GM12878 (cell line): ENCODE measurements at regions of chr2 and their contacts with region 1.

Region 1: DNA sequence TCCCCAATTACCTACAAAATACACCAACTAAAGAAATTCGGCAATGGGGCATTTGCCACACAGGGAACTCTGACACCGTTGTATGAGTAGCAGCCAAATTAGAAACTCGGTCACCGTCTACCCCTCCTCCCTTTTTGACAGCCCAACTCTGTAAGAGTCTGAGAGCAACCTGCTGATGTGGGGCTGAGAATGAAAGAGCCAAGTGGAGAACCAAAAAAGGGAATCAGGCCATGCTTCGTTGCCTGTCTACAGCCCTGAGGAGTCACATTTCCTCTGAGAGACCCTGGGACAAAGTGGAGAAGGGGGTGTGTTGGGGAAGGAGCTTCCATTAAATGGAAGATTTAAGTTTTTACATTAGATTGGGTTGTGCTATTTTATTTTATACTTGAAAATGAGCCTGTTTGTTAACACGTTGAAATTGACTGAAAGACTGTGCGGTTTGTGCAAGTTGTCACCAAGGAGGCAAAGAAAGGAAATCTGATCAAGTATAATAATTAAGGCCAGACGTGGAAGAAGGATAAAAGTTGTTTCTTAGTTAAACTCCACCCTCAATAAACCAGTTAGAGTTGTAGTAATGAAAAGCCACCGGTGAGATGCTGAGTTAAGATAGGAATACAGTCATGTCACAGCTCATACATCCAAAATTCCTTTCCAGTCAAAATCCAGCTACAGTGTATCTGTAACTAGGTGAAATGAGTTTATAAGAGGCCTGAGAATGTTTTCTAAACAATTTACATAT is 131.7 kb upstream of the CREB1 start:
- DNase-seq: no peak
- ATAC-seq: no peak
- H3K4me3 ChIP-seq: no peak overlapping the region
- H3K27ac ChIP-seq: no peak overlapping the region
- H3K4me1 ChIP-seq: no peaks in the 10 kb centered on the region
- H3K27me3 ChIP-seq: no peaks in the 10 kb centered on the region; a peak in 1 of 4 replicates
- CTCF ChIP-seq: no peak
- EP300 ChIP-seq: no peak
- POLR2A ChIP-seq: no peak
- RAD21 ChIP-seq: no peak

Region 2: GRCh38 chr2:207408086-207408794 is 10.2 kb after region 1 on chr2:
- CTCF ChIA-PET with region 1: interaction called, 3 read pairs
- POLR2A ChIA-PET with region 1: no interaction called
- RAD21 ChIA-PET with region 1: no interaction called
- SMC1A ChIA-PET with region 1: interaction called, 10 read pairs
- in situ Hi-C with region 1: no loop called
- intact Hi-C with region 1: no loop called
- DNase-seq: peak; percentile 68
- ATAC-seq: peak; percentile 96
- H3K4me3 ChIP-seq: no peak overlapping the region
- H3K27ac ChIP-seq: no peak overlapping the region
- H3K4me1 ChIP-seq: no peaks in the 10 kb centered on the region; the same call in 1 of the 2 replicates
- H3K27me3 ChIP-seq: no peaks in the 10 kb centered on the region
- CTCF ChIP-seq: no peak
- EP300 ChIP-seq: peak; percentile 30 to 53; a peak in 2 of 4 replicates
- POLR2A ChIP-seq: no peak
- RAD21 ChIP-seq: no peak

Region 3: DNA sequence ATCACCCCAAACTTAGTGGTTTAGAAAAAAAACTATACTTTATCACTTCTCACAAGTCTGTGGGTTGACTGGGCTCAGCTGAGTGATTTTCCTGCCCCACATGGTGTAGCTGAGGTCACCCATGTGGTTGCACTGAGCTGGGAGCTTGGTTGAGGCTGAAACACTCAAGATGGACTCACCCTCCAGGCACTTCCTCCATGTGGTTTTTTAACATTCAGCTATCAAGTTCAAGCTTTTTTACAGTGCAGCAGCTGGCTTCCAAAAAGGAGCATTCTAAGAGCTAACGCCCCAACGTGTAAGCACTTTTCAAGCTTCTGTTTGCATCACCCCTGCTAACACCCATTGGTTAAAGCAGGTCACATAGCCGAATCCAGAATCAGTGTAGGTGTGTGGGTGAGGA is 25.8 kb after region 1 on chr2:
- CTCF ChIA-PET with region 1: no interaction called
- POLR2A ChIA-PET with region 1: no interaction called
- RAD21 ChIA-PET with region 1: no interaction called
- SMC1A ChIA-PET with region 1: no interaction called
- in situ Hi-C with region 1: no loop called
- intact Hi-C with region 1: no loop called
- DNase-seq: peak; percentile 74
- ATAC-seq: peak; percentile 99
- H3K4me3 ChIP-seq: no peak overlapping the region
- H3K27ac ChIP-seq: no peak overlapping the region
- H3K4me1 ChIP-seq: peaks cover 5% of the 10 kb centered on the region; the same call in 1 of the 2 replicates
- H3K27me3 ChIP-seq: no peaks in the 10 kb centered on the region
- CTCF ChIP-seq: no peak
- EP300 ChIP-seq: no peak
- POLR2A ChIP-seq: no peak
- RAD21 ChIP-seq: no peak

Region 4: GRCh38 chr2:207896525-207897295 is 498.6 kb after region 1 on chr2:
- CTCF ChIA-PET with region 1: no interaction called
- POLR2A ChIA-PET with region 1: no interaction called
- RAD21 ChIA-PET with region 1: no interaction called
- SMC1A ChIA-PET with region 1: no interaction called
- in situ Hi-C with region 1: no loop called
- intact Hi-C with region 1: no loop called
- DNase-seq: no peak
- ATAC-seq: no peak
- H3K4me3 ChIP-seq: no peak overlapping the region
- H3K27ac ChIP-seq: no peak overlapping the region
- H3K4me1 ChIP-seq: no peaks in the 10 kb centered on the region
- H3K27me3 ChIP-seq: no peaks in the 10 kb centered on the region
- CTCF ChIP-seq: no peak
- EP300 ChIP-seq: no peak
- POLR2A ChIP-seq: no peak
- RAD21 ChIP-seq: no peak